K562 (cell line): ENCODE measurements at regions of chr2 and their contacts with region 1.

Region 1: GRCh38 chr2:174248187-174248997 is at the start of gene OLA1:
- DNase-seq: peak; percentile 98 to 99 (median 99)
- ATAC-seq: peak; percentile 96
- H3K4me3 ChIP-seq: peak within 1 kb of the TSS; percentile 87
- H3K27ac ChIP-seq: peak within 1 kb of the TSS; percentile 90
- H3K4me1 ChIP-seq: peaks cover 5 to 14% of the 10 kb centered on the region in 2 experiments; a peak in 4 of 5 replicates
- H3K27me3 ChIP-seq: no peaks in the 10 kb centered on the region
- CTCF ChIP-seq: no peak
- EP300 ChIP-seq: no peak; the same call in 1 of the 2 replicates
- POLR2A ChIP-seq: peak; percentile 98
- RAD21 ChIP-seq: no peak
- polyA plus RNA-seq, gene OLA1: 208 to 222 TPM

Region 2: DNA sequence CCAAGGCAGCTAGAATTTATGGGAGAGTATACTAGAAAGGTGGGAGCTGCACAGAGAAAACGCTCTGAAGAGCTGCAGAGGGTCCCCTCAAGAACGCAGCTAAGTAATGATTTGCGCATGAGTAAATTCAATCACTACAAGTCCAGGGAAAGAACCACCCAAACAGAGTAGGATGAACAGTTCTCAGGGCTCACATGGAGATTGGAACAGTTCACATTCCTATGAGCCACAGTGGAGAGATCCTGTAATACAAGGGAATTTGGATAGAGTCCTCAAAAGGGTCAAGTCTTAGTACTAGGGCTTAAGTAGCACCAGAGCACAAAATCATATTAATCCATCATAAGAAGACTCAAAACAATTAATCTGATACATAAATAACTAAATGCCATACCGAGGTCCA is 12.7 kb before region 1 on chr2:
- CTCF ChIA-PET with region 1: no interaction called
- POLR2A ChIA-PET with region 1: interaction called, 14 read pairs
- in situ Hi-C with region 1: no loop called
- intact Hi-C with region 1: no loop called
- DNase-seq: no peak
- ATAC-seq: peak; percentile 23
- H3K4me3 ChIP-seq: no peak overlapping the region
- H3K27ac ChIP-seq: no peak overlapping the region
- H3K4me1 ChIP-seq: peaks cover 0 to 6% of the 10 kb centered on the region in 2 experiments; a peak in 2 of 5 replicates
- H3K27me3 ChIP-seq: no peaks in the 10 kb centered on the region
- CTCF ChIP-seq: no peak
- EP300 ChIP-seq: no peak
- POLR2A ChIP-seq: no peak
- RAD21 ChIP-seq: no peak

Region 3: GRCh38 chr2:174259981-174260380 is 11.6 kb after region 1 on chr2:
- CTCF ChIA-PET with region 1: no interaction called
- POLR2A ChIA-PET with region 1: interaction called, 10 read pairs
- in situ Hi-C with region 1: no loop called
- intact Hi-C with region 1: no loop called
- DNase-seq: no peak
- ATAC-seq: no peak
- H3K4me3 ChIP-seq: no peak overlapping the region
- H3K27ac ChIP-seq: no peak overlapping the region
- H3K4me1 ChIP-seq: no peaks in the 10 kb centered on the region
- H3K27me3 ChIP-seq: peaks cover 0 to 6% of the 10 kb centered on the region in 2 experiments; a peak in 1 of 5 replicates
- CTCF ChIP-seq: no peak
- EP300 ChIP-seq: no peak
- POLR2A ChIP-seq: no peak
- RAD21 ChIP-seq: no peak

Region 4: DNA sequence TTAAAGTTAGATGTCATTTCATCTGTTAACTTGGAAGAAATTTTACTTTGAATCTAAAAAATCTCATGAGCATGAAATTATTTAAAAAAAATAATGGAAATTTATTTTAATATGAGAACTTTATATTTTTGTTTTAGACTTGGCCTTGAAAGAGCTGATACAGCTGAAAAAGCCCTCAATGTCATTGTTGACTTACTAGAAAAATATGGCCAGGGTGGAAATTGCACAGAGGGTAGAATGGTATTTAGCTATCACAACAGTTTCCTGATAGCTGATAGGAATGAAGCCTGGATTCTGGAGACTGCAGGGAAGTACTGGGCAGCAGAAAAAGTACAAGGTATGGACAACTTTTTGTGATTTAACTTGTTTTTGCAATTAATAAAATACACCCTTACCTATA is 152.5 kb after region 1 on chr2:
- CTCF ChIA-PET with region 1: no interaction called
- POLR2A ChIA-PET with region 1: no interaction called
- in situ Hi-C with region 1: no loop called
- intact Hi-C with region 1: no loop called
- DNase-seq: no peak
- ATAC-seq: no peak
- H3K4me3 ChIP-seq: no peak overlapping the region
- H3K27ac ChIP-seq: no peak overlapping the region
- H3K4me1 ChIP-seq: peaks cover 0 to under 1% of the 10 kb centered on the region in 2 experiments; a peak in 1 of 5 replicates
- H3K27me3 ChIP-seq: no peaks in the 10 kb centered on the region
- CTCF ChIP-seq: no peak
- EP300 ChIP-seq: no peak
- POLR2A ChIP-seq: no peak
- RAD21 ChIP-seq: no peak

Region 5: GRCh38 chr2:174835797-174836255 is 587.4 kb after region 1 on chr2:
- CTCF ChIA-PET with region 1: no interaction called
- POLR2A ChIA-PET with region 1: no interaction called
- in situ Hi-C with region 1: no loop called
- intact Hi-C with region 1: no loop called
- DNase-seq: no peak
- ATAC-seq: no peak
- H3K4me3 ChIP-seq: no peak overlapping the region
- H3K27ac ChIP-seq: no peak overlapping the region
- H3K4me1 ChIP-seq: no peaks in the 10 kb centered on the region
- H3K27me3 ChIP-seq: peaks cover 0 to under 1% of the 10 kb centered on the region in 2 experiments; a peak in 2 of 5 replicates
- CTCF ChIP-seq: no peak
- EP300 ChIP-seq: no peak
- POLR2A ChIP-seq: no peak
- RAD21 ChIP-seq: no peak